T-cell (primary cell): ENCODE measurements at regions of chr3 and their contacts with region 1.

Region 1: GRCh38 chr3:30693470-30694120 is 87.2 kb downstream of the TGFBR2 start:
- DNase-seq: peak in 30 of 35 experiments; percentile 16 to 82 (median 38)
- ATAC-seq: peak; percentile 77 to 84 (median 81)
- H3K4me3 ChIP-seq: no peak overlapping the region
- H3K4me3 Mint-ChIP-seq: no peak overlapping the region
- H3K27ac ChIP-seq: peak overlapping the region; percentile 20
- H3K27ac Mint-ChIP-seq: peak overlapping the region; percentile 71 to 75
- H3K4me1 ChIP-seq: peaks cover 25 to 39% of the 10 kb centered on the region in 2 experiments
- H3K4me1 Mint-ChIP-seq: peaks cover 71 to 87% (median 82%) of the 10 kb centered on the region in 3 donors
- H3K27me3 ChIP-seq: no peaks in the 10 kb centered on the region
- H3K27me3 Mint-ChIP-seq: no peaks in the 10 kb centered on the region

Region 2: DNA sequence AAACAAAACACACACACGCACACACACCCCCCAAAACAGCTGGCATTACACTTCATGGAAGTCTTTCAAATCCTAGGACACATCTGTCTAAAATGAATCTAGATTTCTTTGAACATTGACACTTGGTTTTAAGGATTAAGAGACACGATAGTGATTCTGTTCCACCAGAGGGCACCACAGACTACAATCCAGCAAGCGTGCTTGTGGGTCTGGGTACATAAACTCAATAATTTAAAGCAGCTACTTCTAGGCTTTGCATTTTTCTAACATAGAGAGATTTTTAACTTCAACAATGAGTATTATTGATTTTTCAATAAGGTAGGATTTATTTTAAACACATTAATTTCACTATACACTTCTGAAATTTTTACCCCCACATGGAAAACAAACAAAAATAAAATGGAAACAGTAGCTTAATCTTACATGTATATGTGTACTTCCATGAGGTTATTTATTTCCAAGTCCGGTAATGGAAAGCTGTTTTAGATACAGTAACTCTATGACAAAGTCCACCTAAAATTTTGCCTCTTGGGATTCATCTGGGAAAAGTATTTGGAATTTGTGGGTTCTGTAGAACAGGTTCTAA is 651.2 kb before region 1 on chr3:
- CTCF ChIA-PET with region 1: interaction called, 8 to 43 read pairs
- POLR2A ChIA-PET with region 1: interaction called in 1 of 2 experiments, 3 read pairs
- DNase-seq: peak in 34 of 35 experiments; percentile 16 to 76 (median 52)
- ATAC-seq: peak in 1 of 4 experiments; percentile 41
- H3K4me3 ChIP-seq: no peak overlapping the region
- H3K4me3 Mint-ChIP-seq: no peak overlapping the region
- H3K27ac ChIP-seq: no peak overlapping the region
- H3K27ac Mint-ChIP-seq: no peak overlapping the region
- H3K4me1 ChIP-seq: no peaks in the 10 kb centered on the region
- H3K4me1 Mint-ChIP-seq: no peaks in the 10 kb centered on the region
- H3K27me3 ChIP-seq: no peaks in the 10 kb centered on the region
- H3K27me3 Mint-ChIP-seq: peaks cover 19 to 22% of the 10 kb centered on the region in 2 donors

Region 3: DNA sequence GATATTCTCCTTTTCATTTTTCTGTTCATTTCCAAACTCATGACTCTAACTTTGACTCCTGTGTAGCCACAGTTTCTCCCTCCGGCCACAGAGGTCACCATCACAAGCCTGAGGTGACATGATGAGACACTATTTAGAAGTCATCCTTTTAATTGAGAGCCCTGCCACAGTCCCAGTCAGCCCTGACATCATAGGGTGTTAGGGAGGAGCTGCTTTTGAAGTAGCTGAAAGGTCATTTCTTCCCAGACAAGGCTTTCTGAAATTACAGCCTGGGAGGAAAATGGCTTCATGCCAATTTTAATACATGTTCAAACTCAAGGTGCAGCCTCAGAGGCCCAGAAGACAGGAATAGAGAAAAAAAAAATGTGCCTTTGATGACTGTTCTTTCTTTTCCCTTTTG is 620.0 kb before region 1 on chr3:
- CTCF ChIA-PET with region 1: interaction called in 1 of 2 experiments, 14 read pairs
- POLR2A ChIA-PET with region 1: no interaction called
- DNase-seq: no peak
- ATAC-seq: no peak
- H3K4me3 ChIP-seq: no peak overlapping the region
- H3K4me3 Mint-ChIP-seq: no peak overlapping the region
- H3K27ac ChIP-seq: no peak overlapping the region
- H3K27ac Mint-ChIP-seq: no peak overlapping the region
- H3K4me1 ChIP-seq: no peaks in the 10 kb centered on the region
- H3K4me1 Mint-ChIP-seq: no peaks in the 10 kb centered on the region
- H3K27me3 ChIP-seq: no peaks in the 10 kb centered on the region
- H3K27me3 Mint-ChIP-seq: no peaks in the 10 kb centered on the region

Region 4: GRCh38 chr3:30112902-30113484 is 580.6 kb before region 1 on chr3:
- CTCF ChIA-PET with region 1: interaction called, 10 to 15 read pairs
- POLR2A ChIA-PET with region 1: no interaction called
- DNase-seq: peak in 2 of 35 experiments; percentile 5 to 60
- ATAC-seq: peak in 1 of 4 experiments; percentile 45
- H3K4me3 ChIP-seq: no peak overlapping the region
- H3K4me3 Mint-ChIP-seq: no peak overlapping the region
- H3K27ac ChIP-seq: no peak overlapping the region
- H3K27ac Mint-ChIP-seq: peak overlapping the region in 1 of 2 donors; percentile 4
- H3K4me1 ChIP-seq: no peaks in the 10 kb centered on the region
- H3K4me1 Mint-ChIP-seq: peaks cover 6% of the 10 kb centered on the region in 3 donors
- H3K27me3 ChIP-seq: peaks cover 0 to 6% of the 10 kb centered on the region in 2 experiments
- H3K27me3 Mint-ChIP-seq: peaks cover 0 to 5% of the 10 kb centered on the region in 2 donors

Region 5: DNA sequence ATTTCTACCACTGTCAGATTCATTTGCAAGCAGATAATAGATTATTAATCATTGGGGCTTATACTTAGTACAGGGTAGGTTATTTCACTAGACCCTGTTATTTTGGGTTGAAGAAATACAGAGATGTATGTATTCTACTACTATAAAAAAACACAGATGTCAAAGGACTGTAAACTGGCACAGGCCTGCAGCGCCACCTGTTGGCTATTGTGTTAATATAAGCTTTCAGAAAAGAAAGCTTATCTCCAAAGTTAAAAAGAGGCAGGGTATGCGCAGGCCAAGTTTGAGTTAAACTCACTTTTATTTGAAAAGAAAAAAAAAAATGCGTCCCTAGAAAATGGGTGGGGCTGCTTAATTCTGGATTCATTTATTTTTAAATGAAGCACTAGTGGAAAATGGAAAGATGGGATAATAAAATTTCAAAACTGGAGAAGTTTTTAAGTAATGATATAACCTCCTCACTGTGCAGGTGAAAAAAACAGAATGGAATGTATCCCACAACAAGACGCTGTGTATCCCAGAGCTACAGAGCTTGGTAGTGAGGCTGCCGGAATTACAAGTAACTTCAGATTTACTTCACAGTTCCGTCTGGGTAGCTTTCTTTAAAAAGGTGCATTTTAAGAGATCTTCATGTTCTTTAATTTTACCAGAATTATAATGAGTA is 494.4 kb before region 1 on chr3:
- CTCF ChIA-PET with region 1: interaction called, 4 to 35 read pairs
- POLR2A ChIA-PET with region 1: interaction called in 1 of 2 experiments, 3 read pairs
- DNase-seq: peak; percentile 14 to 77 (median 55)
- ATAC-seq: peak in 2 of 4 experiments; percentile 44 to 45
- H3K4me3 ChIP-seq: no peak overlapping the region
- H3K4me3 Mint-ChIP-seq: no peak overlapping the region
- H3K27ac ChIP-seq: no peak overlapping the region
- H3K27ac Mint-ChIP-seq: no peak overlapping the region
- H3K4me1 ChIP-seq: no peaks in the 10 kb centered on the region
- H3K4me1 Mint-ChIP-seq: peaks cover 0 to 6% (median 5%) of the 10 kb centered on the region in 3 donors
- H3K27me3 ChIP-seq: no peaks in the 10 kb centered on the region
- H3K27me3 Mint-ChIP-seq: peaks cover 0 to 2% of the 10 kb centered on the region in 2 donors

Region 6: DNA sequence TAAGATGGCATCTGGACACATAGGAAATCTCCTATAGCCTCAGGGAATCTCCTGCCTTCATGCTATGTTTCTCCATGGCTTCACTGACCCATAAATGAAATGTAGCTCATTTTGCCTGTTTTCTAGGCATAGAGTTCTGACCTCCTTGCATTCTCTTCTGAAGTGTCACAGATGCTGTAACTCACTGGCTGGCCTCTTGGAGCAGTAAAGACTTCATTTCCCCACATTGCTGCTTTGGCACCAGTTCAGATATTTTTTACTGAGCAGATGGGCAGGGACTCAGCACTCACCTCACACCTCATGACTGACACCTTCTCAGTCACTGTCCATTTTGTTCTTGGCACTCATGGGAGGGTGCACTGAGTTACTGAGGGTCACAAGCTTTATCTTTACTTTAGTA is 373.9 kb before region 1 on chr3:
- CTCF ChIA-PET with region 1: interaction called, 16 to 31 read pairs
- POLR2A ChIA-PET with region 1: interaction called in 1 of 2 experiments, 3 read pairs
- DNase-seq: peak in 34 of 35 experiments; percentile 4 to 72 (median 31)
- ATAC-seq: peak; percentile 73 to 94 (median 78)
- H3K4me3 ChIP-seq: no peak overlapping the region
- H3K4me3 Mint-ChIP-seq: no peak overlapping the region
- H3K27ac ChIP-seq: no peak overlapping the region
- H3K27ac Mint-ChIP-seq: no peak overlapping the region
- H3K4me1 ChIP-seq: peaks cover 0 to 2% of the 10 kb centered on the region in 2 experiments
- H3K4me1 Mint-ChIP-seq: peaks cover 7 to 20% (median 12%) of the 10 kb centered on the region in 3 donors
- H3K27me3 ChIP-seq: no peaks in the 10 kb centered on the region
- H3K27me3 Mint-ChIP-seq: no peaks in the 10 kb centered on the region

Region 7: DNA sequence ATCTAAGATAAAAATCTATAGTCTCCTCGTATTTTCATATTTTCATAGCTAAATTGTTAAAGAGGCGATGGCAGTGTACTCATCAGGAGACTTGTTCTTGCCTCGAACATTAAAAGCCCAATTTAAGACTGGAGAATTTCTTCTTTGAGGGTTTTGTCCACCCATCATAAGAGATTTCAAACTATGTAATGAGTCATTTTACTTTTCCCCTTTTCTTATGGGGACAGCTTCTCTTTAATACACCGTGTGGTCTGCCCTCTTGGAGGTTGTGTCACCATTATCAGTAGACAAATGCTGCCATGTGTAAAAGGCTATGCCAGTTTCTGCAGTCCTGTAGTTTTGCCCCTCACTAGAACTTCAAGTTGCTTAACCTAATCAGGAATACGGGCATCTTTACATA is 70.2 kb before region 1 on chr3:
- CTCF ChIA-PET with region 1: interaction called in 1 of 2 experiments, 11 read pairs
- POLR2A ChIA-PET with region 1: no interaction called
- DNase-seq: no peak
- ATAC-seq: no peak
- H3K4me3 ChIP-seq: no peak overlapping the region
- H3K4me3 Mint-ChIP-seq: peak overlapping the region; percentile 47 to 97 (median 61)
- H3K27ac ChIP-seq: peak overlapping the region; percentile 48
- H3K27ac Mint-ChIP-seq: peak overlapping the region; percentile 93
- H3K4me1 ChIP-seq: peaks cover 64 to 90% of the 10 kb centered on the region in 2 experiments
- H3K4me1 Mint-ChIP-seq: peaks cover 94 to 96% (median 95%) of the 10 kb centered on the region in 3 donors
- H3K27me3 ChIP-seq: no peaks in the 10 kb centered on the region
- H3K27me3 Mint-ChIP-seq: no peaks in the 10 kb centered on the region